Astrocyte of the cerebellum (primary cell): ENCODE measurements at regions of chr5 and their contacts with region 1.

Region 1: DNA sequence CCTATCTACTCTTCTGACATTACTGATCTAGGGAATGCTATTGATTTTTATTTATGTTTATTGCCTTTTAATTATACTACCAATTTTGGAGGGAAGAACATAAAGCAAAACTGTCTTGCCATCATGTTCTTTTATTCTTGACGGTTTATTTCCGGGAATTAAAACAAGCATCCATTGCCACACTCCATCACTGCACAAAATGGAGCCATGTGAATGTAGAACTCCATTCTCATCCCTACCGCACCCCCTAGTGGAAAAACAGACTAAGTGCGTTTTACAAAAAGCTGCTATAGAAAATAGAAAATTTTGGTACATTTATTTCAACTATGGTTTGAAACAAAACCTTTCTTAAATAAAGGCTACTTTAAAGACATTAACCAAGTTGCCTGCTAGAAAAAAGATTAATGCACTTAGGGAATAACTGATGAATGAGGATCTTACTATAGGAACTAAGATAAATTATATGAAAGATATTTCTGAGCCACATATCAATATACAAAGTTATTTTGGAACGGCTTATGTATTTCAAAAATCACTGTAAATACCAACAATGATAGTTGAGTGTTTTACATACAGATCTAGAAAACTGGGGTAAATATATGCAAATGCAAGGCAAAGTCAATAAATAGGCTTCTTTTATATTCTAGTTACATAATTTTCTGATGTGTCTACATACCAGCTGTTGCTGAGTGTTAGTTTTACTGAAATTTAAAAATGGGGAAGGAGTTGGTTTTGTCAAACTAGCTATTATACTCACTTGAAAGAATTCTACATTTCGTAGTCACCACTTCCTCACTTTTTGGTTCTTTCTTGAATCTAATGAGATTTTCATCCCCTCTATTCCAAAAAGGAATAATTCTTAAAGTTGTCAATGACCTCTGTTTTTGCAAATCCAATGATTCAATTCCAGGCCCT is 26.5 kb downstream of the OXCT1 start:
- DNase-seq: peak; percentile 55
- H3K4me3 ChIP-seq: no peak overlapping the region
- CTCF ChIP-seq: peak; percentile 70

Region 2: GRCh38 chr5:40904205-40904993 is 939.3 kb before region 1 on chr5:
- in situ Hi-C with region 1: loop called (anchors 25 kb)
- DNase-seq: peak; percentile 82
- H3K4me3 ChIP-seq: no peak overlapping the region
- CTCF ChIP-seq: peak; percentile 100

Region 3: DNA sequence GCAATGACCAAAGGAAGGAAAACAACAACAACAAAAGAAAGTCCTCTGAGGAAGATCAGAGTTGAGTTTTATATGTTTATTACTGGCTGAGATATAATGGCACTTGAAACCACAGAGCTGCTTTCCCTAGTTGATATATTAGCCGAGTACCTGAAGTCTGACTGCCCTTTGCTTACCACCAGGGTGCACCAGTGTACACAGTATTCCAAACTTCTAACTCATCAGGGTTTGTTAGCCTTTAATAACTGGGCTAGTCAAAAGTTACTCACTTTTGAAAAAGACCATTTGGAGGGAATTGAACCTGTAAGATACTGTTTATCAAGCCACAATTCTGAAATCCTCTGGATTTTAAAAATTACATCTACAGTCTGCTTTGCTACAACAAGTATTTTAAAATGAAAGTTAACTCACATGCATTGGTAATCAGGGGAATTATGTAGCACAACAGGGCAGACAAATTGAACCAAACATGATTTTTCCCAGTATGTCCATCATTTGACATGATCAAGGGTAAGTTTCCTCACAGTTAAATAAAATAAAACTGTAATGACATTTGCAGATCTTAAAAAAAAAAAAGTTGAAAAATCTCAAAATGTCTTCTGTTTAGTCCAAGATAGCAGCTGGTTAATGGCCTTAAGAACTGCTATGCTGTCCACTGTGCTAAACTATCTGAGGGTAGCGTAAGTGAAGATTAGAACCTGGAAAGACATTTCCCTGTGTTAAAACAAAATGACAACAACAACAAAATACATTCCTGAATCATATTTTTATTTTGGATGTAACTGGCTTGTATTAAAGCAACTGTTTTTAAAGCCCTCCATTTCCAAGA is 573.1 kb before region 1 on chr5:
- in situ Hi-C with region 1: loop called (anchors 25 kb)
- DNase-seq: peak; percentile 40
- H3K4me3 ChIP-seq: no peak overlapping the region
- CTCF ChIP-seq: peak; percentile 82